ENCODE measurements at regions of chr13 and their contacts with region 1.

Region 1: DNA sequence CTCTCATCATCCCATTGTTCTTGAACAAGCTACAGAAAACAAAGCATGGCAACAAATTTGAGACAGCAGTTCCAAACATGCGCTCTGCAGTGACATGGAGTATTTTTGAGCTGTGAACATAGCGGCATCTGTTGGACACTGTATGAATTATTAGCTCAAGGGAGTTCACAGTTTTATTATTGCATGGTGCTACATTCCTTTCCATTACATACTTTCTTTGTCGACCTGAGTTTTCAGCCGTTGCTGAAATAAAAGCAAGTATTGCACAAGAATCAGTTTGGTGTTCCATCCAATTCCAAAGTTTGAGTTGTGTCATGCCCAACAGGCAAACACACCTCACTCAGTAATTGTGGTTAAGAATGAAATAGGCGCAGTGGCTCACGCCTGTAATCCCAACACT is 30.1 kb upstream of the METTL21C start:
- DNase-seq: peak in 25 of 42 donors; percentile 5 to 77 (median 26)

Region 2: DNA sequence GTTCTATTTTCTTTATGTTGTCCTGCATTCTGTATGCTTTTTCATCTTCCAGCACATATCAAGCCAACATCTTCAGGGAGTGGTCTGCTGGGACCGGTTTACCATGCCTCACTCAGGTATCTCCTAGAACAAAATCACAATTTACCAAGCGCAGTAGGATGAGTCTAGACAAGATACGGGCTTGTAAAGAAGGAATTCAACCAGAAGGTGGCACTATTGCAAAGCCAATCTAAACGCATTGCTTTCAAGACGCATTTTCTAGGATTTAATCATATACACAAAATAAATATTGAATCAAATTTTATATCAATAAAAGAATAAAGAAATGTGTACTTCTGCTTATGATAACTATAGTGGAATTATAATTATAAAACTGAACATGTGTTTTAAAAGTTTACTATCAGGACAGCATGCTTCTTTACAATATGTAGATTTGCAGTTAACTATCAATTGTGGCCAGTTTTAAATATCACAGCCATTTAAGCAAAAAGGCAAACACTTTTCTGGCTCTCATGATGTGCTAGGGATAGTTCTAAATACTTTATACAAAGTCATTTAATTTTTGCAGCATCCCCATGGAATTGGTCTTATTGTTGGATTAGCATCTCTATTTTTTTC is 144.3 kb before region 1 on chr13:
- intact Hi-C with region 1: loop called (anchors 5 kb)
- DNase-seq: peak in 19 of 42 donors; percentile 15 to 84 (median 49)

Region 3: GRCh38 chr13:102892503-102892902 is 167.6 kb after region 1 on chr13:
- intact Hi-C with region 1: no loop called
- DNase-seq: no peak

Region 4: DNA sequence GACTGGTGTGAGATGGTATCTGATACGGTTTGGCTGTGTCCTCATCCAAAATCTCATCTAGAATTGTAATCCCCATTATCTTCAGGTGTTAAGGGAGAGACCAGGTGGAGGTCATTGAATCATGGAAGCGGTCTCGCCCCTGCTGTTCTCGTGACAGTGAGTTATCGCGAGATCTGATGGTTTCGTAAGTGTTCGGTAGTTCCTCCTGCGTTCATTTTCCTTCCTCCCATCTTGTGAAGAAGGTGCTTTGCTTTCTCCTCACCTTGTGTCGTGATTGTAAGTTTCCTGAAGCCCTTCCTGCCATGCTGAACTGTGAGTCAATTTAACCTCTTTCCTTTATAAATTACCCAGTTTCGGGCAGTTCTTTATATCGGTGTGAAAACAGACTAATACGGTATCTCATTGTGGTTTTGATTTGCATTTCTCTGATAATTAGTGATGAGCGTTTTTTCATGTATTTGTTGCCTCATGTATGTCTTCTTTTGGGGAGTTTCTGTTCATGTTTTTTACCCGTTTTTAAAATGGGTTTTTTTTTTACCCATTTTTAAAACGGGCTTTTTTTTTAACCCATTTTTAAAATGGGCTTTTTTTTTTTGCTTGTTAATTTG is 444.1 kb after region 1 on chr13:
- intact Hi-C with region 1: no loop called
- DNase-seq: no peak